ENCODE measurements at regions of chr4 and their contacts with region 1.

Region 1: GRCh38 chr4:137124278-137124932 is 407.9 kb downstream of the PCDH18 start:
- DNase-seq: peak; percentile 68
- ATAC-seq: peak; percentile 99
- H3K4me3 ChIP-seq: peak overlapping the region; percentile 85
- H3K27ac ChIP-seq: peak overlapping the region; percentile 17; the same call in 1 of the 2 replicates
- H3K4me1 ChIP-seq: peaks cover 8% of the 10 kb centered on the region; the same call in 1 of the 2 replicates
- H3K27me3 ChIP-seq: no peaks in the 10 kb centered on the region
- CTCF ChIP-seq: peak; percentile 68

Region 2: DNA sequence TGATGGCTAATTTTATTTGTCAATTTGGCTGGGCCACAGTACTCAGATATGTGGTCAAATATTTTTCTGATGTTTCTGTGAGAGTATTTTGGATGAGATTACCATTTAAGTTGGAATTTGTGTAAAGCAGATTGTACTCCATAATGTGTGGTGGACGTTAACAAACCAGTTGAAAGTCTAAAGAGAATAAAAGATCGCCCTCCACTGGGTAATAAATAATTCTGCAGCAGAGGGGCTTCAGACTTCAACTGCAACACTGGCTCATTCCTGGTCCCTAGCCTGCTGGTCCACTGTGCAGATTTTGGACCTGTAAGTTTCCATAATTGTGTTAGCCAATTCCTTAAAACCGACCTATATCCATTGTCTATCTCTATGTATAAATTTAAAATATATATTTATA is 132.4 kb before region 1 on chr4:
- CTCF ChIA-PET with region 1: no interaction called
- POLR2A ChIA-PET with region 1: no interaction called
- intact Hi-C with region 1: no loop called
- DNase-seq: no peak
- ATAC-seq: no peak
- H3K4me3 ChIP-seq: no peak overlapping the region
- H3K27ac ChIP-seq: no peak overlapping the region
- H3K4me1 ChIP-seq: no peaks in the 10 kb centered on the region
- H3K27me3 ChIP-seq: no peaks in the 10 kb centered on the region
- CTCF ChIP-seq: no peak

Region 3: GRCh38 chr4:137213372-137214173 is 89.2 kb after region 1 on chr4:
- CTCF ChIA-PET with region 1: interaction called, 5 read pairs
- POLR2A ChIA-PET with region 1: no interaction called
- intact Hi-C with region 1: loop called (anchors 2 kb)
- DNase-seq: no peak
- ATAC-seq: no peak
- H3K4me3 ChIP-seq: no peak overlapping the region
- H3K27ac ChIP-seq: no peak overlapping the region
- H3K4me1 ChIP-seq: 0 out of 2 replicates have a peak, but pooled peaks cover 6% of the 10 kb centered on the region
- H3K27me3 ChIP-seq: no peaks in the 10 kb centered on the region
- CTCF ChIP-seq: no peak

Region 4: GRCh38 chr4:137283737-137284136 is 159.3 kb after region 1 on chr4:
- CTCF ChIA-PET with region 1: interaction called, 3 read pairs
- POLR2A ChIA-PET with region 1: no interaction called
- intact Hi-C with region 1: loop called (anchors 5 kb)
- DNase-seq: peak; percentile 49
- ATAC-seq: peak; percentile 54; the same call in 1 of the 2 replicates
- H3K4me3 ChIP-seq: no peak overlapping the region
- H3K27ac ChIP-seq: no peak overlapping the region
- H3K4me1 ChIP-seq: no peaks in the 10 kb centered on the region
- H3K27me3 ChIP-seq: no peaks in the 10 kb centered on the region
- CTCF ChIP-seq: peak; percentile 50

Region 5: DNA sequence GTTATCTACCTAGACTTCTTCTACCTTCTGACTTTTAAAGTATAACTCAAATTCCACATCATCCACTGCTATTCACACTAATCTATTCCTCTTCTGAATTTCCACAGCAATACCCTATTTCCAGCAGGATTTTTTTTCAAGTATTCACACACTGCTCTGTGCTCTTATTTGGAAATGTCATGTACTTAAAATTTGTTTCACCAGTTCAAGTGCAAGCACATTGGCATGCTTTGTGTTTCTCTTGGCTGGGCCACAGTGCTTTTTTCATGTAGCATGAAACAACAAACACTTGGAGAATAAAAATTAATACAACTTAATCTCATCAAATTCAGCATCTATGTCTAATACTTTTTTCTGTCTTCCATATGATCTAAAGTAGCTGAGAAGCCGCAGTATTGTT is 569.7 kb after region 1 on chr4:
- CTCF ChIA-PET with region 1: no interaction called
- POLR2A ChIA-PET with region 1: no interaction called
- intact Hi-C with region 1: no loop called
- DNase-seq: no peak
- ATAC-seq: no peak
- H3K4me3 ChIP-seq: no peak overlapping the region
- H3K27ac ChIP-seq: no peak overlapping the region
- H3K4me1 ChIP-seq: no peaks in the 10 kb centered on the region
- H3K27me3 ChIP-seq: no peaks in the 10 kb centered on the region
- CTCF ChIP-seq: no peak

Region 6: DNA sequence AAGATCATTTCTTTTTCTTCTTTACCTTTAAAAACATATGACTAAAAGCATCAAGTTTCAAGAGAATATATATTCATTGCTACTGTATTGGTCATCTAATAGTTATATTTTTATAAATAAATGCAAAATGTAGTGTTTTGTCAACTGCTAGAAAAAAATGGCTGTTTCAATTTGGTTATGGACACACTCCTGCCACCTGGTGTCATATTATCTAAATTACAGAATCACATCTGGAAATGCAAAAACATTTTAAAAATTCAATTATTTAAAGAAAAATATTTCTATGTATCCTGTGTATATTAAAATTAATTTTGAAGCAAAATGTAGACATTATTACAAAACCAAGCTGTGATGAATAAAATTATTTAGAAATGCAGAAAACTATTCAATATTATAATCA is 737.3 kb after region 1 on chr4:
- CTCF ChIA-PET with region 1: no interaction called
- POLR2A ChIA-PET with region 1: no interaction called
- intact Hi-C with region 1: loop called (anchors 2 kb)
- DNase-seq: peak; percentile 25
- ATAC-seq: no peak
- H3K4me3 ChIP-seq: no peak overlapping the region
- H3K27ac ChIP-seq: no peak overlapping the region
- H3K4me1 ChIP-seq: no peaks in the 10 kb centered on the region
- H3K27me3 ChIP-seq: no peaks in the 10 kb centered on the region
- CTCF ChIP-seq: peak; percentile 38